Left cardiac atrium (tissue), 4 donors: ENCODE measurements at regions of chr18 and their contacts with region 1.

Region 1: GRCh38 chr18:23515911-23516546 is 12.7 kb downstream of the RMC1 start:
- DNase-seq: peak; percentile 76
- ATAC-seq: peak; percentile 94 to 95

Region 2: GRCh38 chr18:23586249-23587196 is 70.5 kb after region 1 on chr18 and contains the start of gene NPC1:
- intact Hi-C with region 1: loop called in 1 of 2 experiments (anchors 5 kb)
- DNase-seq: peak; percentile 96
- ATAC-seq: peak; percentile 98 to 99
- total RNA-seq, gene NPC1: 17.1 to 29.7 TPM